ENCODE measurements at regions of chr11 and their contacts with region 1.

Region 1: DNA sequence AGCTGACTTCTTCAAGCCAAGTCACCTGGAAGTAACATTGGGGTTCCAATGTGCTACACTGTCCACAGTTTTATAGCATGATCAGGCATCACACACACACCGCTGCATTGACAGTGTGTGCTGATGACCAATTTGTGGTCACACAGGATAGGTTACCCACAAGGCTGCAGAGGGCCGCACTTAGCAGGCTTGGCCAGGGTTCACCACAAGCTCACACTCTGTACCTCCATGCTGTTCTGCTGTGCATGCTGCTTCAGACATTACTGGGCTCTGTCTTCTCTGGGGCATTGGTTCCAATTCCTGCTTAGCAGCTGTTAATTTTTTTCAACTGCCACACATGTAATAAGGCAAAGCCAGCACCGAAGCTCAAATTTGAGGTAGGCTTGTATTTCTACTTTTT is 11.0 kb upstream of the NRIP3 start:
- DNase-seq: no peak
- ATAC-seq: no peak

Region 2: DNA sequence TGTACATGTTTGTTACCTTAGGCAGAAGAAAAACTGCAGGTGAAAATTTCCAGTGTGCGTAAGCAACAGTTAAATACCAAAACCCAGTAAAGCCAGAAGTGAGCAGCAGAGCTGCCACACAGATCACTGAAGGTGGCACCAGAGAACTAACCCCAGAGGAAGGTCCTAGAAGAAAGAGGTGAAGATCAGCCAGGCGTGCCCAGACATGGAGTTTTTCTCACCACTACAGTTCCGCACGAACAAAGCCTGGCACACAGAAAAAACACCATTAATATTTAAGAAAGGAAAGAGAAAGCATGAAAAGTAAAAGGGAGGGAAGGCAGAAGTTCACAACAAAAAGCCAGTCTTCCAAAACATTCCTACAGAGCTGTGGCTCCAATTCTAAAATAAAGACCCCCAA is 481.5 kb before region 1 on chr11:
- intact Hi-C with region 1: no loop called
- DNase-seq: no peak
- ATAC-seq: no peak

Region 3: GRCh38 chr11:9137293-9138132 is 122.7 kb after region 1 on chr11:
- intact Hi-C with region 1: loop called (anchors 5 kb)
- DNase-seq: peak; percentile 83
- ATAC-seq: peak; percentile 93